Heart right ventricle (tissue), 16 donors: ENCODE measurements at regions of chr21 and their contacts with region 1.

Region 1: GRCh38 chr21:43938751-43939442 is 73.2 kb upstream of the TRAPPC10 start:
- DNase-seq: peak; percentile 78 to 83
- ATAC-seq: peak; percentile 81 to 95 (median 89)
- H3K4me3 ChIP-seq: peak overlapping the region in 8 of 10 donors; percentile 13 to 54 (median 48)
- H3K27ac ChIP-seq: peak overlapping the region in 8 of 10 donors; percentile 3 to 61 (median 50)
- H3K4me1 ChIP-seq: peaks cover 5 to 45% (median 27%) of the 10 kb centered on the region in 9 donors
- H3K27me3 ChIP-seq: no peaks in the 10 kb centered on the region
- CTCF ChIP-seq: peak; percentile 90 to 100 (median 96)

Region 2: GRCh38 chr21:43991447-43991991 is 52.6 kb after region 1 on chr21:
- intact Hi-C with region 1: loop called in 2 of 10 experiments (anchors 10 kb)
- DNase-seq: no peak
- ATAC-seq: no peak
- H3K4me3 ChIP-seq: no peak overlapping the region
- H3K27ac ChIP-seq: no peak overlapping the region
- H3K4me1 ChIP-seq: peaks cover 0 to 17% (median 10%) of the 10 kb centered on the region in 9 donors
- H3K27me3 ChIP-seq: no peaks in the 10 kb centered on the region
- CTCF ChIP-seq: no peak